A673 (cell line): ENCODE measurements at regions of chr18 and their contacts with region 1.

Region 1: DNA sequence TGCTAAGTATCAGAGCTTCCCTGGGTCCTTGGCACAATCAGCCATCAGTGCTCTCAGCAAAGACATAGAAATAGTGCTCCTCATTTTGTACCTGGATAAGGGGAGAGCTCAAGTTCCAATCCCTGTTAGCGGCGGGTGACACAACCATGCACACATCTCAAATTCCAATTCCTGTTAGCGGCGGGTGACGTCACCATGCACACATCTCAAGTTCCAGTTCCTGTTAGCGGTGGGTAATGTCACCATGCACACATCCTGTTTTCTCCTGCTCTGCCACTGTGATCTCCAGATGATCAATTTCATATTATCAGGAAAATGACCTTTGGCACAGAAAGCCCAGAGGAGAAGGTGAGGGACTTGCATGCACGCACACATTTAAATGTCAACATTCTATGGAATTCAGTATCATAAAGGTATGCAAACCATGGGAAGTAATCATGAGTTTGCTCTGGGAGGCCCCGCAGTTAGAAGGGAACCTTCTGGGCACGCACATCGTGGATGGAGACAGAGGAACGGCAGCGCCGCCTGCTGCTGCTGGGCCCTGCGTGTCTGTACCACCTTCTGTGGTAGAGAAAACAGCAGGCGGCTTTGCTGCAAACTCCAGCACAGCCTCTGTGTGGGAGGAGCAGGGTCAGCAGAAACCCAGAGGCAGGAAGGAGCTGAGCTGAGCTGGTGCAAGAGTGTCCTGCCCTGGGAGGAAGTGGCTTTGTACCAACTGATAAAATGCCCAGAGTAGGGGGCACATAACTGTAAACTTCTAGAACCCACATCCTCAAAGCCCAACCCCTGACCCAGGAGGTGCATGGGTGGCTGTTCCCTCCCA is 77.8 kb downstream of the MBP start:
- DNase-seq: peak; percentile 58
- H3K4me3 ChIP-seq: no peak overlapping the region
- H3K27ac ChIP-seq: no peak overlapping the region
- H3K4me1 ChIP-seq: no peaks in the 10 kb centered on the region
- H3K27me3 ChIP-seq: no peaks in the 10 kb centered on the region
- CTCF ChIP-seq: peak; percentile 64

Region 2: DNA sequence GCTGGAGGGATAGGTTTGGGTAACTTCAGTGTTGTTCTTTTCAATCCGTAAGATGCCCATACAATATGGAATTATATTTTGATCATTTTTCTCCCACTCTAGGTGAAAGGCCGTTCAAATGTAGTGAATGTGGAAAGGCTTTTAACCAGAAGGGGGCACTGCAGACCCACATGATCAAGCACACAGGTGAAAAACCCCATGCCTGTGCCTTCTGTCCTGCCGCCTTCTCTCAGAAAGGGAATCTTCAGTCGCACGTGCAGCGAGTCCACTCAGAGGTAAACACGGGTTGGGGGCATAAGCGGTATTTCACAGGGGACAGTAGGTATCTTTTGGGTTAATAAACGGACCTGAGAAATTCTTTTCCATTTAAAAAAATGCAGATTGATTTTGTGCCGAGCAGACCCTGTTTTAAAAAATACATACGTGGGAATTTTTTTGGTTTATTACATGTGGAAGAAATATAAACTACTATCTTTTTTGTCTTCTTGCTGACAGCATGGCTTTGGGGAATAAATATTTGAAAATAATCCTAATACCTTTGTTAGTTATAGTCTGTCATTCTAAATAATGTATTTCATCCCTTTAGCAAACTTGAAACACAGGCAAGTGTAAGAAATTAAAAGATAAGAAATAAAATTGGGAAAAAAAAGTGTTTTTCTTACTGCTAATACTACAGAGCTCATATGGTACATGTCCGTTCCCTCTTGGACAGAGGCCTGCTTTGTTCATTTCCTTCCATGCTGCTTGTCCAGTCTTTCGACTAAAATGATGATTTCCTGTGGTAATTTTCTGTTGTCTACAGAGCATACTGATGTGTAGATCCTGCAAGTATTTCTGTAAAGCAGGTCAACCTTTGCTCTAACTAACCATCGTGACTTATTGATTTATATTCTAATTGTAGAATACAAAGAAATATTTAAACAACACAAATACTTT is 179.2 kb before region 1 on chr18:
- CTCF ChIA-PET with region 1: no interaction called
- POLR2A ChIA-PET with region 1: no interaction called
- intact Hi-C with region 1: loop called (anchors 5 kb)
- DNase-seq: peak; percentile 45
- H3K4me3 ChIP-seq: no peak overlapping the region
- H3K27ac ChIP-seq: no peak overlapping the region
- H3K4me1 ChIP-seq: no peaks in the 10 kb centered on the region
- H3K27me3 ChIP-seq: no peaks in the 10 kb centered on the region
- CTCF ChIP-seq: peak; percentile 70

Region 3: DNA sequence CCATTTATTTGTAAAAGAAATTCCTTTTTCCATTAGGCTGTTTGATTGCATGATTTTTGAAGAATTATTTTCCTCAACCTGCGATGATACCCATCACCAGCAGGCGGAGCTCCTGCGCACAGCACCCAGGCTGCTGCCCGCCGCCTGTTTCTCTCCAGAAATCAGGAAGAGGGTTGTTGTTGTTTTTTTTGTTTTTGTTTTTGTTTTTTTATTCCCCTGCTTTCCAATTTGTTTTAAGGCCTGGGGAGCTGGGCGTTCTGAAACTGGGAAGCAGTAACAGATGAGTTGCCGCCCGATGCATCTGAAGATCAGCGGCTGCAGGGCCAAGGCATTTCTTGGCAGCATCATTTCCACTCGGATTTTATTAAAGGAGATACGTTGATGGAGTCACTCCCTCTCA is 54.3 kb before region 1 on chr18:
- CTCF ChIA-PET with region 1: no interaction called
- POLR2A ChIA-PET with region 1: no interaction called
- intact Hi-C with region 1: loop called (anchors 2 kb)
- DNase-seq: peak; percentile 41
- H3K4me3 ChIP-seq: no peak overlapping the region
- H3K27ac ChIP-seq: no peak overlapping the region
- H3K4me1 ChIP-seq: no peaks in the 10 kb centered on the region
- H3K27me3 ChIP-seq: peaks cover 43% of the 10 kb centered on the region
- CTCF ChIP-seq: peak; percentile 99